Activated CD4-positive, alpha-beta T cell treated with anti-CD3 and anti-CD28 coated beads, Interleukin-2, amount 10 ng/mL, durations not matched to agents 7 days and 5 days (primary cell): ENCODE measurements at regions of chr6 and their contacts with region 1.

Region 1: GRCh38 chr6:35247642-35248231 is 11.8 kb upstream of the ZNF76 start:
- DNase-seq: no peak
- H3K4me3 Mint-ChIP-seq: no peak overlapping the region
- H3K27ac Mint-ChIP-seq: no peak overlapping the region
- H3K4me1 Mint-ChIP-seq: peaks cover 19% of the 10 kb centered on the region
- H3K27me3 Mint-ChIP-seq: no peaks in the 10 kb centered on the region

Region 2: GRCh38 chr6:35195120-35195780 is 52.5 kb before region 1 on chr6:
- CTCF ChIA-PET with region 1: no interaction called
- POLR2A ChIA-PET with region 1: no interaction called
- DNase-seq: no peak
- H3K4me3 Mint-ChIP-seq: no peak overlapping the region
- H3K27ac Mint-ChIP-seq: no peak overlapping the region
- H3K4me1 Mint-ChIP-seq: no peaks in the 10 kb centered on the region
- H3K27me3 Mint-ChIP-seq: peaks cover 23% of the 10 kb centered on the region

Region 3: DNA sequence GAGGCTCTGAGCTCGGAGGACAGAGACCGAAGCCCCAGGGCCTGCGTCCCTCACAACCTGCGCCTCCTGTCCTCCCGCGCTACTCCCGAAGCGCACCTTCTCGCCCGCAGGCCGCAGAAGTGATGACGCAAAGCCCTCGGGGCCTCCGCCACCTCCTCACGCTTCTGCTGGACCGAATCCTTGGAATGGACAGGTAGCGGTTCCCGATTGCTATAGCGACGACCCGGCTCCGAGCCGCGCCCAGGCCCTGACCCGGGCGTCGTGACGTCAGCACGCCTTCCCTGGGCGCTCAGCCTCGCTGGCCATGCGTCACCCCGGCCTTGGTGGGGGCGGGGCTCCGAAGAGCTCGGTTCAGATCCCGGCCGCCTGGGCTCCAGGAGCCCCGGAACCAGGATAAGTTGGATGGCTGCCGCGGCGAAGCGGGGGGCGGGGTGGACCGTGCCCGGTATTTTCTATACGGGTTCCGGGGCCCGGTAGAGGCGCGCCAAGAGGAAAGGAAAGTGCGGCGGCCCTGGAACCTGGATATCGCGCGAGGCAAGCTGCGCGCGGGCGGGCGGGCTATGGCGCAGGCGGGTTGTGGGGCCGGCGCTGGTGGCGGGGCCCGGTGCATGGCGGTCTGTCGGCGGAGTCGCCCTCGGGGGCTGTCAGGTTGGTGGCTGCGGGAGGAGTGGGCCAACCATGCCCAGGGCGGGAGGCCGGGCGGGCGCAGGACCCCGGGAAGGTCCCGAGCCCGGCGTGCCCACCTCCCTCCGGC is 11.6 kb after region 1 on chr6 and contains the start of gene ZNF76:
- CTCF ChIA-PET with region 1: interaction called, 18 read pairs
- POLR2A ChIA-PET with region 1: interaction called, 4 read pairs
- DNase-seq: peak; percentile 90
- H3K4me3 Mint-ChIP-seq: peak within 1 kb of the TSS; percentile 97
- H3K27ac Mint-ChIP-seq: peak within 1 kb of the TSS; percentile 94
- H3K4me1 Mint-ChIP-seq: peaks cover 51% of the 10 kb centered on the region
- H3K27me3 Mint-ChIP-seq: no peaks in the 10 kb centered on the region
- total RNA-seq, gene ZNF76: 41.1 to 42.4 TPM